BJ (cell line): ENCODE measurements at regions of chr22 and their contacts with region 1.

Region 1: GRCh38 chr22:45896261-45896951 is 80.6 kb downstream of the WNT7B start:
- DNase-seq: no peak
- H3K4me3 ChIP-seq: no peak overlapping the region
- H3K27me3 ChIP-seq: peaks cover 15% of the 10 kb centered on the region
- CTCF ChIP-seq: no peak

Region 2: DNA sequence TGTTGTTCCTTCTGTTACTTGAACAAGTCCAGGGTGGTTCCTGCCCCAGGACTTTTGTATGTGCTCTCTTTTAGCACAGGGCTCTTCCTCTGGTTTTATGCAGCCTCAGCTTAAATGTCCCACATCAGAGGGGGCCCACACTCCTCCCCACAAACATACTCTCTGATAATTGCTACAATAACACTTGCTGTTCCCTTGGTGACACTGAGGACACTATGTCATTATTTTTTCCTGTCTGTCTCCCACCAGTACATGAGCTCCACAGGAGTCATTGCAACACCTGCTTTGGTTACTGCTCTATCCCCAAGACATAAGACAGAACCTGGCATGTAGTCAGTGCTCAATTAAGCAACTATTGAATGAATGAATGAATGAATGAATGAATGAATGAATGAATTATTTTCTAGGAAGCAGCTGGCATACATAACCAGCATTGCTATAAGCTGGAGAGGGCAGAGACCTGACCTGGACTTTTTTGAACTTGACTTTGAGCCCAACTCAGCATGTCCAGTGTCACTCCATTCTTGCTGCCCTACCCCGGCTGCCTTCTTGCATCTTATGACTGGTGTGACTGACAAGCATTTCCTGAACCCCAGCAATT is 88.0 kb after region 1 on chr22:
- CTCF ChIA-PET with region 1: no interaction called
- POLR2A ChIA-PET with region 1: interaction called, 11 read pairs
- DNase-seq: no peak
- H3K4me3 ChIP-seq: no peak overlapping the region
- H3K27me3 ChIP-seq: peaks cover 8% of the 10 kb centered on the region
- CTCF ChIP-seq: no peak

Region 3: GRCh38 chr22:46044621-46045438 is 148.4 kb after region 1 on chr22:
- CTCF ChIA-PET with region 1: no interaction called
- POLR2A ChIA-PET with region 1: no interaction called
- DNase-seq: no peak
- H3K4me3 ChIP-seq: peak overlapping the region; percentile 54
- H3K27me3 ChIP-seq: no peaks in the 10 kb centered on the region
- CTCF ChIP-seq: no peak